ENCODE measurements at regions of chr2 and their contacts with region 1.

Region 1: GRCh38 chr2:54723131-54723995 is at the start of gene EML6:
- DNase-seq: peak; percentile 99
- H3K4me3 Mint-ChIP-seq: peak within 1 kb of the TSS; percentile 85
- H3K27ac Mint-ChIP-seq: peak within 1 kb of the TSS; percentile 34
- H3K4me1 Mint-ChIP-seq: peaks cover 12% of the 10 kb centered on the region
- H3K27me3 Mint-ChIP-seq: peaks cover 31% of the 10 kb centered on the region
- total RNA-seq, gene EML6: 0.46 to 0.50 TPM

Region 2: DNA sequence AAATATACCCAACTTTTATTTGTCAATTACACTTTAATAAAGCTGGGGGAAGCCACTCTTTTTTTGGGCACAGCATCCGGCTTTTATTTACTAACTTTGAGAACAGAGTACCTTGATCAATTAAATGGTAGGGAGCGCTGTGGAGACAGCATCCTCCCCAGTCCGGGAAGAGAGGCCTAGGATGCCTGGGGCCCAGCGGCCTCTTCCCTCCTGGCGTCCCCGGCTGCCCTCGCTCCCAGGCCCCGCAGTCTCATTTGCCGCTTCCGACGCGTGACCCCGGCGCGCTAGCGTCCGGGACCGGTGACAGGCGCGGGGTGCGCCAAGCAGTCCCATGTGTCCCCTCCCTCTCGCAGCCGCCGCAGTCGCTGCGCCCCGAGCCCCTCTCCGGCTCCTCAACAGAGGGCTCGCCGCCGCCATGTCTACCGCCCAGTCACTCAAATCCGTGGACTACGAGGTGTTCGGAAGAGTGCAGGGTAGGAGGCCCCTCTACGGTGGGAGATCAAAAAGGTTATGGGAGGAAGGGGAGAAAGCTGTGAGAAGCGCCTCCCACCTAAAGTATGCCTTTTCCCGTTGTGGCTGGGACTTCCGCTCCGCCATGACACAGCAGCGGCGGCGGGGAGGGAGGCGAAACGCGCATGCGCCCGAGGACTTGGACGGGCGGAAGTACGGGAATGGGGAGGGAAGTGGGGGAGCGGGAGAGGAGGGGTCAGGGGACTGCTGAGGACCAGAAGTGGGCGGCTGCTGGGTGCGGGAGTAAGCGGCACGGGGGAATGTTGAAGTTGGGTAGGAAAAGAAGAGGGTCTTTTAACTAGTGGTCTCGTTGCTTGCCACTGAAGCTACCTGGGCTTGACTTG is 607.9 kb before region 1 on chr2 and contains the start of gene ACYP2:
- CTCF ChIA-PET with region 1: no interaction called
- POLR2A ChIA-PET with region 1: no interaction called
- intact Hi-C with region 1: loop called (anchors 1 kb)
- DNase-seq: peak; percentile 95
- H3K4me3 Mint-ChIP-seq: peak within 1 kb of the TSS; percentile 94
- H3K27ac Mint-ChIP-seq: peak within 1 kb of the TSS; percentile 99
- H3K4me1 Mint-ChIP-seq: peaks cover 13% of the 10 kb centered on the region
- H3K27me3 Mint-ChIP-seq: no peaks in the 10 kb centered on the region
- total RNA-seq, gene ACYP2: 5.6 to 6.4 TPM

Region 3: DNA sequence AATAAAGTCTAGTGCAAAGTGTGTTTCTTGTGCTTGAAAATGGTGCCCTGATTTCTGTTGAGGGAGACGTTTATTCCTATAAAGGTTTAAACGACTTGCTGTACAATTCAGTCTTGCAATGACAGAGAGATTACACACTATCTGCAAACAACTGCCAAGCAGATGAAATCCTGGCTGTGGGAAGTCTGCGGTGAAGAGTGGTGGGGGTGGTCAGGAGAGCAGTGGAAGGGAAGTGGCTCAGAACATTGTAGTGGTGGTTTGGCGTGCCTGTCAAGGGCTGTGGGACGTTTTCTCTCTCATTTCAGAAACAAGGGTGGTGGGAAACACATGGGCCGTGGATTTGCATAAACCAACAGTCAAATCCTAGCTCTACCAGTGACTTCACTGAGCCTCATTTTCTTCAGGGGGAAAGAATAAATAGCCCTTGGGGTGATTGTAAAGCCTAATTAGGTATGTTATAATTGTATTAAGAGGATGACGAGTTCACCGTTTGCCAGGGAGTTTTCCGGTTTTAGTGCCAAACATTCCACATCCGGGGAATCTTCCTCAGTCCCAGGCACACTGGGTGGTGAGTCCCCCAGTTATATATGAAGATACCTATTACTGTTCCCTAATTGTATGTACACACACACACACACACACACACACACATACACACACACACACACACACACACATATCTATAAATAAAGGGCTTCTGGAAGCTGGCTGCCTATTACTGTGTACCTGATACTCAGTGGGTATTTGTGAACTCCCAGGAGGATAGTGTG is 152.3 kb before region 1 on chr2:
- CTCF ChIA-PET with region 1: no interaction called
- POLR2A ChIA-PET with region 1: interaction called, 4 read pairs
- intact Hi-C with region 1: loop called (anchors 1 kb)
- DNase-seq: peak; percentile 93
- H3K4me3 Mint-ChIP-seq: peak overlapping the region; percentile 36
- H3K27ac Mint-ChIP-seq: peak overlapping the region; percentile 96
- H3K4me1 Mint-ChIP-seq: peaks cover 85% of the 10 kb centered on the region
- H3K27me3 Mint-ChIP-seq: no peaks in the 10 kb centered on the region

Region 4: GRCh38 chr2:54704688-54705605 is 18.4 kb before region 1 on chr2:
- CTCF ChIA-PET with region 1: interaction called, 19 read pairs
- POLR2A ChIA-PET with region 1: no interaction called
- intact Hi-C with region 1: no loop called
- DNase-seq: no peak
- H3K4me3 Mint-ChIP-seq: no peak overlapping the region
- H3K27ac Mint-ChIP-seq: no peak overlapping the region
- H3K4me1 Mint-ChIP-seq: peaks cover 6% of the 10 kb centered on the region
- H3K27me3 Mint-ChIP-seq: peaks cover 19% of the 10 kb centered on the region

Region 5: DNA sequence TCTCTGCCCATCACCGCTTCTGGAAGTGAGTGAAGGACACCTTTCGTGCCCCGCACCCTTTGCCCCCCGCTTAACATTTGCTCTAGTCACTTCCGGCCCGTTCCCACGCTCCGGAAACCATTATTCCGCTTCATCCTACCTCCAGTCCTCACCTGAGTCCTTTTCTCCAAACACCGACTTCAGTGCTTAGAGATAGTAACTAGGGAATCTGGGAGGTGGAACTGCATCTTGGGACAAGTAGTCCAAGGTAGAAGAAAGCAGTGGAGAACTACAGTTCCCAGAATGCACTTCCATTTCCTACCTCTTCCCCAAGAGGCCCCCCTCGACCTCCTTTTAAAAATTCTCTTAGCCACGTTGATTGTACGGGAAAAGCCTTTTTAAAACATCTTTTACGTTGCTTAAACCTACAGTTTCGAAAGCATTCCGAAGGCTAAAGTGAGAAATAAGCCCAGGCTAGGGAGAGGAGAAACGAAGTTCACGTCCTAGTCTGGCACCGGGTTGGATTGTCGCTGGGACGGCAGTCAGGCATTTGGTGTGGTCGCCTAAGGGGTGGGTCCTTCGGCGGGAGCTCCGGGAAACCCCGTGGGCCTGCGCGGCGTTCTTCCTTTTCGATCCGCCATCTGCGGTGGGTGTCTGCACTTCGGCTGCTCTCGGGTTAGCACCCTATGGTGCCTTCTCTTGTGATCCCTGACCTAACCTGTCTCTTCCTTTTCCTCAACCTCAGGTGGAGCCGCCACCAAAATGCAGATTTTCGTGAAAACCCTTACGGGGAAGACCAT is 508.9 kb after region 1 on chr2 and contains the starts of genes CLHC1 and RPS27A:
- CTCF ChIA-PET with region 1: no interaction called
- POLR2A ChIA-PET with region 1: no interaction called
- intact Hi-C with region 1: loop called (anchors 2 kb)
- DNase-seq: peak; percentile 95
- H3K4me3 Mint-ChIP-seq: peak within 1 kb of the TSS; percentile 96
- H3K27ac Mint-ChIP-seq: peak within 1 kb of the TSS; percentile 94
- H3K4me1 Mint-ChIP-seq: peaks cover 60% of the 10 kb centered on the region
- H3K27me3 Mint-ChIP-seq: no peaks in the 10 kb centered on the region
- total RNA-seq, gene CLHC1: 5.5 to 7.5 TPM
- total RNA-seq, gene RPS27A: 1,372 to 1,402 TPM

Region 6: DNA sequence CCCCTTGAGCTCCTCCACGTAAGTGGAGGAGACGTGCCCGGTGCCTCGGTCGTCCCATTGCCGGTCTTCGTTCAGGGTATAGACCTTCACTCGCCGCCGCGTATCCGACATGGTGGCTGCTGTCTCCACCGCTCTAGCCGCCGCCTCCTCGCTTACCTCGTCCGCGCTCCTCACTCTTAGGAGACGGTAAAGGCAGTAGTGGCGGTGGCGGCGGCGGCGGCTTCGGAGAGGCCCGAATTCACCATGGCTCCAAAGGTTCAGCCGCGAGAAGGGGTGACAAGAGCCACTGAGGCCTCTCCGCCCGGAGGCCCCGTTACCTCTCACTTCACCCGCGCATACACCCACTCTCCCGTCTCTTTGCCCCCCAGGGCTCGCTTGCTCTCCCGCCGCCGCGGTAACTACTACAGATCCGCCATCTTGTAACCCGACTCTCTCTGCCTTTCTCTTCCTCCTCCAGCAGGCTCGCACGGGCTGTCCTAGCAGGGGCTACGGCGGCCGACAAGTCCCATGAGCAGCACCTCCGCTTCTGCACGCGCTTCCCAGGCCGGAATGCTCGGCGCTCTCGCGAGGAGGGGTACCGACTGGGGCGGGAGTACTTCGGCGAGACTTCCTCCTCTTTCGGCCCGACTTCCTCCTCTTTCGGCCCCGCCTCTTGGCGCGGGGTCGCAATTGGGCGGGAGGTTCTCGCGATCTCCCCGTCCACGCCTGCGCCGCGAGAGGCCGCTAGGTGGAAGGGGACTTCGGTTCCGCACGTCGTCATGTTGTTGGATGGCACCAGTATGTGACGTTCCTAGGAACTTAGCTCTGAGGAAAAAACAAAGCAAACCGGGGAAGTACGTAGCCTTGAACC is 894.0 kb after region 1 on chr2 and contains the start of gene PPP4R3B:
- CTCF ChIA-PET with region 1: no interaction called
- POLR2A ChIA-PET with region 1: no interaction called
- intact Hi-C with region 1: loop called (anchors 2 kb)
- DNase-seq: peak; percentile 99
- H3K4me3 Mint-ChIP-seq: no peak within 1 kb of the TSS
- H3K27ac Mint-ChIP-seq: no peak within 1 kb of the TSS
- H3K4me1 Mint-ChIP-seq: peaks cover 47% of the 10 kb centered on the region
- H3K27me3 Mint-ChIP-seq: no peaks in the 10 kb centered on the region
- total RNA-seq, gene PPP4R3B: 62.4 to 65.1 TPM

Measured in activated CD4-positive, alpha-beta memory T cell treated with anti-CD3 and anti-CD28 coated beads for 36 hours (primary cell).